ENCODE measurements at regions of chr2 and their contacts with region 1.

Region 1: GRCh38 chr2:237512774-237513466 is 25.9 kb downstream of the MLPH start:
- DNase-seq: peak; percentile 90
- CTCF ChIP-seq: peak; percentile 89

Region 2: DNA sequence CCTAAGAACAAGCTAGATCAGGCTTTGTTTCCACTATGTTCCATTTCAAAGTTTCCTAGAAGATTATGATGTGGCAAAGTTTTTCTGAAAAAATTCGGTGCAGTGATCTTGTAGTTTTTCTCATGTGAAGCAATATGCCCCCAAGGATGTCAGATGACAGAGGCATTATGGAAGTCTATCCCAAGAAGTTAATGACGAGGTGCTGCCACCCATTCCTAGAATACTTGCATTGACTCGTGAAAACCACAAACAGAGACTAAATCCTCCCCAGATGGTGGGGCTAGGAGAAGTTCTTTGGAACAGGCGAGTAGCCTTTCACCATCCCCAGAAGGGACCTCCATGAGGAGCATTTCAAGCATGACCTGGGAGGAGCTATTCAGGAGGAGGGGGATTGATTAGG is 467.5 kb before region 1 on chr2:
- in situ Hi-C with region 1: no loop called
- DNase-seq: no peak
- CTCF ChIP-seq: no peak

Region 3: DNA sequence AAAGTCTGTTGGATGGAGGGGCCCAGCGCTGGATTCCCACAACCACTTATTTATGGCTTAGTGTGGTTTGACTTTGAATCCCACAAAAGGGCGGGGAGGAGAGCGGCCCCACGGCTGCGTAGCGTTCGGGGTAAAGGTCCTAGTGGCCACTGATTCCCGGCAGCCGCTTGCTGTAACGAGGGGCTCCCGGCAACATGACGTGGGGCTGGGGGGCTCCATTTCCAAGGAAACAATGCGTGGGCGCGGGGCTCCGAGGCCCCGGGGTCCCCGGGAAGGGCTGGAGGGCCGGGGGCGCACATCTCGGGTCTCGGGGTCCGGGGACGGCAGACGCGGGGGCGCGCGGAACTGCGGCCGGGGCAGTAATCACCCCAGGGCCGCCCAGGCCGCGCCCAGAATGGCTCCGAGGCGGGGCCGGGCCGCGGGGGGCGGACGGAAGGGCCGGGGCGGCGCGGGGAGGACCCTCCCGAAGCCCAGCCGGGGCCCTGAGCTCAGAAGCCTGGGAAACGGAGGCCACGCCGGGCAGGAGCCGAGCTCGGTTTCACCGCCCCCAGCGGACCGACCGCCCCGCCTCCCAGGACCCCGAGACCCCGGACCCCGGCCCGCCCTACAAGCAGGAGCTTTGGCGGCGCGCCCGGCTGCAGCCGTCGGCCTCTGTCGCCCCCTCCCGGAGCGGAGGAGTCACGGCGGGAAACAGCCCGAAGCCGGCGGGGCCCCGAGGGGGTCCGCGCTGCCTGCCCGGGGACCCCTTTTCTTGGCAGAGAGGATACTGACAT is 37.8 kb before region 1 on chr2:
- in situ Hi-C with region 1: no loop called
- DNase-seq: peak; percentile 92
- CTCF ChIP-seq: peak; percentile 90

Region 4: GRCh38 chr2:237572021-237572741 is 59.3 kb after region 1 on chr2:
- in situ Hi-C with region 1: loop called (anchors 5 kb)
- DNase-seq: peak; percentile 97
- CTCF ChIP-seq: peak; percentile 86

Measured in GM13976 (cell line).